Naive thymus-derived CD8-positive, alpha-beta T cell (primary cell): ENCODE measurements at regions of chr19 and their contacts with region 1.

Region 1: GRCh38 chr19:4342615-4343369 is 570 bp upstream of the MPND start:
- DNase-seq: peak; percentile 78 to 97 (median 93)
- ATAC-seq: peak; percentile 82 to 84
- H3K4me3 Mint-ChIP-seq: peak overlapping the region; percentile 84 to 95 (median 92)
- H3K27ac Mint-ChIP-seq: peak overlapping the region; percentile 60 to 97 (median 93)
- H3K4me1 Mint-ChIP-seq: peaks cover 19 to 42% (median 37%) of the 10 kb centered on the region in 4 donors
- H3K27me3 Mint-ChIP-seq: peaks cover 0 to 2% (median 0%) of the 10 kb centered on the region in 5 donors

Region 2: GRCh38 chr19:3979289-3979673 is 363.5 kb before region 1 on chr19:
- POLR2A ChIA-PET with region 1: no interaction called
- DNase-seq: peak in 1 of 10 donors; percentile 10
- ATAC-seq: no peak
- H3K4me3 Mint-ChIP-seq: peak overlapping the region in 2 of 10 donors; percentile 3 to 18
- H3K27ac Mint-ChIP-seq: peak overlapping the region in 4 of 10 donors; percentile 31 to 71 (median 59)
- H3K4me1 Mint-ChIP-seq: peaks cover 9 to 38% (median 27%) of the 10 kb centered on the region in 4 donors
- H3K27me3 Mint-ChIP-seq: no peaks in the 10 kb centered on the region

Region 3: DNA sequence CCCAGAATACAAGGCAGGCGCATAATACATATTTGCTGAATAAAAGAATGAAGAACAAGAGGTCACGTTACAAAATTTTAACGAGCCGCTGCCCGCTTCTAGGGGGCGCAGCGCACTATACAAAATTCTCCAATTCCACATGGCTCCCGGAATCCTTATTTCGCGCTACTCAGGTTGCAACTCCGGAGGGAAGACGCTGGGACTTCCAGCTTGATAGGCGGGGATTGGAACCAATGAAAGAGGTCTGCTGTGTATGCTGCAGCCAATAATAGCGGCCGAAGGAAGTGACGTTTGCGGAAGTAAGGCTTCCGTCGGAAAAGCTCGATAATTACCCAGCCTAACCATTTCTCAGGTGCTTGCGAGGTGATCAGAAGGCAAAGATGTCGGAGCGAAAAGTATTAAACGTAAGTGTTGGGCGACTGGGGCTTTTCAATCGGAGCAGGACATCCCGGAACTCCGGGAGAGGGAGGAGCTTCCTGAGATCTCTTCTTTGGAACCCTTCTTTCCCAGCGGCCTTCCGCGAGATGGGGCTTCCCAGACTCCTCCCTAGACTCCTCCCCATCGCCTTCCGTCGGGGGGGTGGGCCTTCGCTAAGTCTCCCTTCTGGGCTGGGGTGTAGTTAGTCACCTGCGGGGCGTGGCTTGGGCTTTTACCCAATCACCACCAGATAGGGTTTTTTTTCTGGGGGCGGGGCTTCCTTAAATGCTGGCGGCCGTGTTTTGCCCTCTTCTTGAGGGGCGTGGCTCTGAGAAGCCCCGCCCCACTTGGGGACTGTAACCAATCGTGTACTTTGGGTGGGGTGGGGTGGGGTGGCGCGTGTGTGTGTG is 95.8 kb before region 1 on chr19 and contains the start of gene YJU2:
- POLR2A ChIA-PET with region 1: interaction called, 14 read pairs
- DNase-seq: peak; percentile 94 to 100 (median 99)
- ATAC-seq: peak; percentile 91 to 94
- H3K4me3 Mint-ChIP-seq: peak within 1 kb of the TSS; percentile 88 to 100 (median 97)
- H3K27ac Mint-ChIP-seq: peak within 1 kb of the TSS; percentile 95 to 100 (median 99)
- H3K4me1 Mint-ChIP-seq: peaks cover 11 to 25% (median 20%) of the 10 kb centered on the region in 4 donors
- H3K27me3 Mint-ChIP-seq: peaks cover 0 to 3% (median 0%) of the 10 kb centered on the region in 5 donors
- polyA plus RNA-seq, gene YJU2: 20.2 to 35.3 (median 28.1) TPM

Region 4: GRCh38 chr19:4267101-4267900 is 75.5 kb before region 1 on chr19:
- POLR2A ChIA-PET with region 1: interaction called, 18 read pairs
- DNase-seq: peak; percentile 43 to 81 (median 58)
- ATAC-seq: peak; percentile 60 to 72
- H3K4me3 Mint-ChIP-seq: peak overlapping the region in 1 of 10 donors; percentile 22
- H3K27ac Mint-ChIP-seq: peak overlapping the region in 7 of 10 donors; percentile 12 to 75 (median 70)
- H3K4me1 Mint-ChIP-seq: peaks cover 13 to 34% (median 33%) of the 10 kb centered on the region in 4 donors
- H3K27me3 Mint-ChIP-seq: no peaks in the 10 kb centered on the region

Region 5: DNA sequence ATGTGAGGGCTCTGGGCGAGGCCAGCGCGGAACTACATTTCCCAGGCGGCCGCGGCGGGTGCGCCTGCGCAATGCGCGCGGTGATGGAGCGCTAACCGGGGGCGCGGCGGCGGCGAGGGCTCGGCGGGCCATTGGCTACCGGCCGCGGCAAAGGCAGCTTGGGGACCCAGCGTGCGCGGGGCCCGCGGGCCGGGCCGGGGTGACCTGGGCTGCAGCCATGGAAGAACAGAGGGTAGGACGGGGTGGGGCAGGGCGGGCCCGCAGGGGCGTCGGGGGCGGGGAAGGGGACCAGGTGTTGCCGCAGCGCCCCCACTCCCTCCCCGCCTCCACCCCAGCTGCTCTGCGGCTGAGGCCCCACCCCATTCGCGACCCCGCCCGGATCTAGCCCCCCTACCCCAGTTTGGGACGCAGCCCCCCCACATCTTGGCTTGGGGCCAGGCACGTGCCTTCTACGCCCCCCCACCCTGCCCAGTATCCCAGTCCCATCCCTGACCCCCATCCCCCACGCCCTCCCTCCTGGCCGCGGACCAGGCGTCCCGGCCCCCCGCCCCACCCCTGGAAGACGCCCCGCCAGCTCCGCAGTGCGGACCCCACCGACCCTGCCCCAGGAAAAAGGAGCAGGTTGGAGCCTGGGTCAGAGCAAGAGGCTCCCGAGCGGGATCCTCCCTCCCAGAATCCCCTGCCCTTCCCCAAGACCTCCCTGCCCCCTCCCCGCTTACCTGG is 38.1 kb before region 1 on chr19 and contains the start of gene FSD1:
- POLR2A ChIA-PET with region 1: interaction called, 30 read pairs
- DNase-seq: peak; percentile 45 to 74 (median 64)
- ATAC-seq: peak; percentile 53 to 74
- H3K4me3 Mint-ChIP-seq: peak within 1 kb of the TSS; percentile 63 to 98 (median 76)
- H3K27ac Mint-ChIP-seq: peak within 1 kb of the TSS in 9 of 10 donors; percentile 74 to 99 (median 88)
- H3K4me1 Mint-ChIP-seq: peaks cover 19 to 45% (median 36%) of the 10 kb centered on the region in 4 donors
- H3K27me3 Mint-ChIP-seq: no peaks in the 10 kb centered on the region
- polyA plus RNA-seq, gene FSD1: 1.5 to 3.9 (median 3.4) TPM

Region 6: GRCh38 chr19:4328243-4328990 is 14.4 kb before region 1 on chr19:
- POLR2A ChIA-PET with region 1: interaction called, 18 read pairs
- DNase-seq: peak; percentile 87 to 99 (median 94)
- ATAC-seq: peak; percentile 82 to 87
- H3K4me3 Mint-ChIP-seq: peak overlapping the region; percentile 75 to 95 (median 85)
- H3K27ac Mint-ChIP-seq: peak overlapping the region; percentile 43 to 98 (median 88)
- H3K4me1 Mint-ChIP-seq: peaks cover 11 to 39% (median 33%) of the 10 kb centered on the region in 4 donors
- H3K27me3 Mint-ChIP-seq: peaks cover 0 to 4% (median 0%) of the 10 kb centered on the region in 5 donors

Region 7: DNA sequence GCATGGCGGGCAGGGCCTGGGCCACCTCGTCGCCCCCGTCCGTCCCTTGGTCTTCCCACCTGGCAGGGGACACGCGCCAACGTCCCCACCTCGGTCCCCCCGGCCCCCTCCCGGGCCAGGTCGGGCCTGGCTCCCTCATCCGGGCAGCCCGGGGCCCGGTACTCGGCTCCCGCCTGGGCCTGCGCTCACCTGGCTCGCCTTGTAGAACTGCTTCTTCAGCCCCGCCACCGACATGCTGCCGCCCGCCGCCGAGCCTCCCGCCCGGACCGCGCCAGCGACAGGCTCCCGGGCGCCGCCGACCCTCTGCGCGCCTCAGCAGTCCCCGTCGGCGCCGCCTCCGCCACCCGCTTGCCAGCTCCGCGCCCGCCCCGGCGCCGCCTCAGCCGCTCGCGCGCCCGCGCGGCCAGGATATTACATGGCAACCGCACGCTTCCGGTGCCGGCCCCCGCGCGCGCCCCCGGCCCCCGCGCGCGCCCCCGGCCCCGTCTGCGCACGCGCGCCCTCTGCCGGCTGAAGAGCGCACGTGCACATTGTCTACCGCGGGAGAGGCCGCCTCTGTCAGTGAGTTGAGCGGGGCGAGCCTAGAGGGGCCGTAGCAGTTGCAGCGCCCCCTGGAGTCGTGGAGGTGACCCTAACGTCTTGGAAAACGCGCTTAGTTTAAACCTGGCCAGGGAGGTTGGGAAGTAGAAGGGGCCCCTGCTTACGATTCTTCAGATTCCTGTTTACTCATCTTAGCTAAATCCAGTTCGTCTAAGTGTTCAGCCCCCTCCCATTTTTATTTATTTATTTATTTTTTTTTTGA is 57.5 kb after region 1 on chr19 and contains the start of gene SH3GL1:
- POLR2A ChIA-PET with region 1: interaction called, 34 read pairs
- DNase-seq: peak; percentile 86 to 96 (median 92)
- ATAC-seq: peak; percentile 61 to 66
- H3K4me3 Mint-ChIP-seq: peak within 1 kb of the TSS; percentile 79 to 97 (median 92)
- H3K27ac Mint-ChIP-seq: peak within 1 kb of the TSS; percentile 86 to 99 (median 98)
- H3K4me1 Mint-ChIP-seq: peaks cover 30 to 68% (median 61%) of the 10 kb centered on the region in 4 donors
- H3K27me3 Mint-ChIP-seq: no peaks in the 10 kb centered on the region
- polyA plus RNA-seq, gene SH3GL1: 11.8 to 20.4 (median 12.3) TPM